ENCODE measurements at regions of chr9 and their contacts with region 1.

Region 1: DNA sequence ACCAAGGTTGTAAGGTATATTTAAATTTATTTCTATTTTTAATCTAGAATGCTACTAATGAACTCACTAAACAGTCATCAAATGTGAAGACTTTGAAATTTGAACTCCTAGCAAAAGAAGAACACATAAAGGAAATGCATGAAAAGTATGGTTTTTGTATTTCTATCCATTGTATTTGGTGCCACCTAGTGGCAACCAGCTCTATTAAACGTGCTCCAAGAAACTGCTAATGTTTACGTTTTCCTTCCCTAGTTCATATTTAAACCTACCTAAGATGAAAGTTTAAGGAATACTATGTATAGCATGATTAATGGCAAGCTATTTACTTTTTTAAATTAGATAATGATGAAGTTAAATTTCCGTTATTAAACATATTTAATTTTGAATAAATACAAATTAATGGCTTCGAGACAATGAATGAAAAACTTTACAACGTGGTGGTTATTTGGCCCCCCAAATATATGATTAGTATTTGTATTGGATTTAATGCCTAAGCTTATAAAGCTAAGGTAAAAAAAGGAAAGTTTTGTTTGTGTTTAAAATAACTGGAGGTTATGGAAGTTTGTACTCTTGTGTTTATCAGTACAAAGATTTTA is 115.9 kb upstream of the SH3GL2 start:
- DNase-seq: no peak
- H3K4me3 Mint-ChIP-seq: no peak overlapping the region
- H3K27ac Mint-ChIP-seq: no peak overlapping the region
- H3K4me1 Mint-ChIP-seq: no peaks in the 10 kb centered on the region
- H3K27me3 Mint-ChIP-seq: no peaks in the 10 kb centered on the region

Region 2: GRCh38 chr9:15837079-15837679 is 1625.8 kb before region 1 on chr9:
- intact Hi-C with region 1: loop called (anchors 10 kb)
- DNase-seq: no peak
- H3K4me3 Mint-ChIP-seq: no peak overlapping the region
- H3K27ac Mint-ChIP-seq: no peak overlapping the region
- H3K4me1 Mint-ChIP-seq: no peaks in the 10 kb centered on the region
- H3K27me3 Mint-ChIP-seq: no peaks in the 10 kb centered on the region

Region 3: GRCh38 chr9:17063535-17064135 is 399.3 kb before region 1 on chr9:
- intact Hi-C with region 1: loop called (anchors 1 kb)
- DNase-seq: no peak
- H3K4me3 Mint-ChIP-seq: no peak overlapping the region
- H3K27ac Mint-ChIP-seq: no peak overlapping the region
- H3K4me1 Mint-ChIP-seq: no peaks in the 10 kb centered on the region
- H3K27me3 Mint-ChIP-seq: no peaks in the 10 kb centered on the region

Region 4: GRCh38 chr9:17116400-17116837 is 346.5 kb before region 1 on chr9:
- intact Hi-C with region 1: loop called (anchors 1 kb)
- DNase-seq: no peak
- H3K4me3 Mint-ChIP-seq: no peak overlapping the region
- H3K27ac Mint-ChIP-seq: no peak overlapping the region
- H3K4me1 Mint-ChIP-seq: no peaks in the 10 kb centered on the region
- H3K27me3 Mint-ChIP-seq: no peaks in the 10 kb centered on the region

Region 5: DNA sequence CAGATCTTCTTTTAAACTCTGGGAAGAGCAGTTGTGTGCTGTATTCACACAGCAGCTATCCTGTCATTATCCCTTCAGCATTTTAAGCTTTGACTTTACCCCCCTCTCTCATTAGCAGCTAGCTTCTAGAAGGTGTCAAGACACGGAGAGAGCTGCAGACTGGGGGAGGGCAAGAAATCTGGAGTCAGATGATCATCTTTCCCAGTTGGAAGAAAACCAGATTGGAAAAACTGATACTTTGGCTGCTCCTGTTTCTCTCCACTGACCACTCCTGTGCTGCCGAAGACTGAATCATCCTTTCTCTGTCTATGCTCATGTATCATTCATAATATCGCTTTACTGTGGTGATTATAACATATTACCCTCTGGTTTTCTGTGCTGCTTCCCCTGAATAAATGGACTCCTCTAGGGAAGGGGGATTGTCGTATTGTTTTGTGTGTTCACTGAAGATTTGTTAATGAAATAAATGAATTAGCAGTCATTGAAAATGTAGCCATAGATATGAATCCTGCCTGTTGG is 191.0 kb after region 1 on chr9:
- intact Hi-C with region 1: no loop called
- DNase-seq: no peak
- H3K4me3 Mint-ChIP-seq: no peak overlapping the region
- H3K27ac Mint-ChIP-seq: no peak overlapping the region
- H3K4me1 Mint-ChIP-seq: no peaks in the 10 kb centered on the region
- H3K27me3 Mint-ChIP-seq: no peaks in the 10 kb centered on the region